K562 (cell line): ENCODE measurements at regions of chr15 and their contacts with region 1.

Region 1: DNA sequence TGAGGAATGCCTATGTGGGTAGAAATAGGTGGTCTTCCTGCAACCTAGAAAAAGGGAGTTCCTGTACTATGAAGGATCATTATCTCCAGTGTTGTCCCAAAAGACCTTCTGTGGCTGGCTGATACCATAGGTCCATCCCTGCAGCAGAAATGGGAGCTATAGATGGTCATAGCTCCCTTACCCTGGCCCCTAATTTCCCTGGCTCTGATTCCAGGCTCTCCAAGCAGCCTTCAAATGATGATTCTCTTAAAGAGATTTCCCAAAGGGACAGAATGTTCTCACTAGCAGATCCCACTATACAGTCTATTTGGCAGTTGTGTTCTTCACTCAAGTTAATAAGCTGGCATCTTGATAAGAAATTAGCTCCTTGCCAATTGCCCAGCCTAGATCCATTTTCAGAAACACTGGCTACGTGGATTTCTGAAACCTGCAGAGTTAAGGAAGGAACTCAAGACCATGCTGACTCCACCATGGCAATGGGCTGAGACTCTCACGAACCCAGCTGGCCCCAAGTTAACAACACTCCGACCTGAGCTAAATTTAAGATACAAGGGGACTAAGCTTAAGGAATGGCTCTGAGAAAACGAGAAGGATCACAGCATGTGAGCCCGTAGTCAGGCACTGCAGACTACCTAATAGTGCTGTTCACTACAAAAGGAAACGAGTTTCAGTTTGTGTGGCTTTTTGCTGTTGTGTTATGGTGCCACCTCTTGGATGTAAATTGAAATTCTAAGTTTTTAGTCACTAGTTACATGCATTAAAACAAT is 11.4 kb downstream of the C15orf40 start:
- DNase-seq: peak; percentile 27 to 67 (median 42)
- ATAC-seq: peak; percentile 92
- H3K4me3 ChIP-seq: no peak overlapping the region
- H3K27ac ChIP-seq: peak overlapping the region; percentile 2; the same call in 1 of the 3 replicates
- H3K4me1 ChIP-seq: peaks cover 0 to 5% of the 10 kb centered on the region in 2 experiments; a peak in 2 of 5 replicates
- H3K27me3 ChIP-seq: no peaks in the 10 kb centered on the region
- CTCF ChIP-seq: peak; percentile 56 to 83 (median 65)
- EP300 ChIP-seq: no peak
- POLR2A ChIP-seq: no peak
- RAD21 ChIP-seq: peak; percentile 91 to 96

Region 2: DNA sequence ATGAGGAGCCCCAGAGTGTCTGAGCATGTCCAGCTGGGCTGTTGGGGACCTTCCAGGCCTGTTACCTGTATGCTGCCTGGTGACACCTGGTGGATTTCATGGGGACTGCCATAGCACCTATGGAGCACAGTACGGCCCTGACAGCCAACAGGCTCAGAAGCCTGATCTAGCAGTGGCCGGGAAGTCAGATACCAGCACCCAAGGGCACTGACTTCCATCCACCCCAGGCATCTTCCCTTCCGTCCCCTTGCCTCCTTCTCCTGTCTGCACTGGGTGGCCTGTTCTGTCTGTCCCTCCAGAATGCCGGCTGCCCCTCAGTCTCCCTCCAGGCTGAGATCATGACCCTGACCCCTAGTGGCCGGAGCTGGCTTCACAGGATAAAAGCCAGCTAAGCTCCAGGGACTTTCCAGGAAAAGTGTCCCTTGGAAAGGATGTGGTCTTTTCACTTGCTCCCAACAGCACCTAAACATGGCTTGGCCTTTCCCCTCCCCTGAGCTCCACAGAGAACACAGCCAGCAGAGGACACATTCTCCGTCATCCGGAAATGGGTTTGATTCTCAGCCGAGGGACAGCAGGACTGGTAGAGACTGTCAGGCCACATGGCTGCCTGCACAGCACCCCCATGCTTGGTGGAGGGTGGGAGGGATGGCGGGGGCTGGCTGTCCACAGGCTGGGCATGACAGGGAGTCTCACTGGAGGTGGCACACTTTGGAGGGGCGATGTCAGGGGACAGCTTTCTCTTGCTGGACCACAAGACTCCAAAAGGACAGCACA is 469.3 kb before region 1 on chr15:
- CTCF ChIA-PET with region 1: no interaction called
- POLR2A ChIA-PET with region 1: no interaction called
- in situ Hi-C with region 1: loop called (anchors 5 kb)
- intact Hi-C with region 1: no loop called
- DNase-seq: peak; percentile 71 to 83 (median 76)
- ATAC-seq: peak; percentile 88
- H3K4me3 ChIP-seq: 0 out of 2 replicates have a peak overlapping the region, but pooled peaks have one; percentile 20
- H3K27ac ChIP-seq: peak overlapping the region; percentile 30; the same call in 2 of the 3 replicates
- H3K4me1 ChIP-seq: peaks cover 9 to 20% of the 10 kb centered on the region in 2 experiments; a peak in 3 of 5 replicates
- H3K27me3 ChIP-seq: no peaks in the 10 kb centered on the region
- CTCF ChIP-seq: peak; percentile 53 to 96 (median 77); a peak in 5 of 6 replicates
- EP300 ChIP-seq: no peak
- POLR2A ChIP-seq: no peak
- RAD21 ChIP-seq: peak; percentile 46 to 58

Region 3: GRCh38 chr15:82540055-82540983 is 459.8 kb before region 1 on chr15 and contains the start of gene RPS17:
- CTCF ChIA-PET with region 1: no interaction called
- POLR2A ChIA-PET with region 1: interaction called, 4 read pairs
- in situ Hi-C with region 1: no loop called
- intact Hi-C with region 1: loop called (anchors 2 kb)
- DNase-seq: peak; percentile 98 to 99 (median 98)
- ATAC-seq: peak; percentile 93
- H3K4me3 ChIP-seq: peak within 1 kb of the TSS; percentile 95
- H3K27ac ChIP-seq: peak within 1 kb of the TSS; percentile 93
- H3K4me1 ChIP-seq: peaks cover 10 to 17% of the 10 kb centered on the region in 2 experiments; a peak in 4 of 5 replicates
- H3K27me3 ChIP-seq: no peaks in the 10 kb centered on the region
- CTCF ChIP-seq: peak; percentile 96 to 98 (median 97)
- EP300 ChIP-seq: peak; percentile 25; the same call in 1 of the 2 replicates
- POLR2A ChIP-seq: peak; percentile 99
- RAD21 ChIP-seq: peak; percentile 45 to 57
- polyA plus RNA-seq, gene RPS17: 1,988 to 2,233 TPM

Region 4: DNA sequence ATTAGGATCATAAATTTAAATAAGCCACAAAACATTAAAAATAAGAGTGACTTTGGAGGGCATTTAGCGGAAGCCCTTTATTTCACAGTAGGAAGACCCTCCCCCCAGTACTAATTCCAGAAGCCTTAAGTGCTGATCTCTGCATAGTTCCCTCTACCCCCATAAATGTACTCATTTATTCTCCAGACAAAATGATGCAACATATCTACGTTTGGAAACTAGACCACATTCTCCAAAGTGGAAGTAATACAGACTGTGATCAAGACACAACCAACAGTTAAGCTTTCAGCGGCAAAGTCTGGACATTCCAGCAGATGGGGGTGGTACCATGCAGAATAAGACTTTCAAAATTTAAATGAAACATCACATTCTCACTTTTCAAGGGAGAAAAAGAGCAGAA is 415.0 kb before region 1 on chr15:
- CTCF ChIA-PET with region 1: interaction called, 14 read pairs
- POLR2A ChIA-PET with region 1: no interaction called
- in situ Hi-C with region 1: no loop called
- intact Hi-C with region 1: loop called (anchors 2 kb)
- DNase-seq: peak in 1 of 4 experiments; percentile 18
- ATAC-seq: peak; percentile 81
- H3K4me3 ChIP-seq: no peak overlapping the region
- H3K27ac ChIP-seq: no peak overlapping the region
- H3K4me1 ChIP-seq: no peaks in the 10 kb centered on the region
- H3K27me3 ChIP-seq: no peaks in the 10 kb centered on the region
- CTCF ChIP-seq: peak in 2 of 3 experiments; percentile 43 to 55; a peak in 4 of 6 replicates
- EP300 ChIP-seq: no peak
- POLR2A ChIP-seq: no peak
- RAD21 ChIP-seq: peak; percentile 50 to 60

Region 5: GRCh38 chr15:82803793-82804574 is 196.1 kb before region 1 on chr15:
- CTCF ChIA-PET with region 1: no interaction called
- POLR2A ChIA-PET with region 1: no interaction called
- in situ Hi-C with region 1: no loop called
- intact Hi-C with region 1: no loop called
- DNase-seq: no peak
- ATAC-seq: no peak
- H3K4me3 ChIP-seq: no peak overlapping the region
- H3K27ac ChIP-seq: no peak overlapping the region
- H3K4me1 ChIP-seq: peaks cover 27 to 38% of the 10 kb centered on the region in 2 experiments
- H3K27me3 ChIP-seq: no peaks in the 10 kb centered on the region
- CTCF ChIP-seq: no peak
- EP300 ChIP-seq: no peak
- POLR2A ChIP-seq: no peak
- RAD21 ChIP-seq: no peak